ENCODE measurements at regions of chr9 and their contacts with region 1.

Region 1: GRCh38 chr9:35923927-35924763 is 14.9 kb downstream of the SPAAR start:
- DNase-seq: no peak
- H3K4me3 Mint-ChIP-seq: no peak overlapping the region
- H3K27ac Mint-ChIP-seq: no peak overlapping the region
- H3K4me1 Mint-ChIP-seq: no peaks in the 10 kb centered on the region
- H3K27me3 Mint-ChIP-seq: peaks cover 16% of the 10 kb centered on the region

Region 2: GRCh38 chr9:35599763-35600604 is 324.2 kb before region 1 on chr9:
- CTCF ChIA-PET with region 1: no interaction called
- DNase-seq: no peak
- H3K4me3 Mint-ChIP-seq: no peak overlapping the region
- H3K27ac Mint-ChIP-seq: no peak overlapping the region
- H3K4me1 Mint-ChIP-seq: peaks cover 23% of the 10 kb centered on the region
- H3K27me3 Mint-ChIP-seq: peaks cover 4% of the 10 kb centered on the region

Region 3: DNA sequence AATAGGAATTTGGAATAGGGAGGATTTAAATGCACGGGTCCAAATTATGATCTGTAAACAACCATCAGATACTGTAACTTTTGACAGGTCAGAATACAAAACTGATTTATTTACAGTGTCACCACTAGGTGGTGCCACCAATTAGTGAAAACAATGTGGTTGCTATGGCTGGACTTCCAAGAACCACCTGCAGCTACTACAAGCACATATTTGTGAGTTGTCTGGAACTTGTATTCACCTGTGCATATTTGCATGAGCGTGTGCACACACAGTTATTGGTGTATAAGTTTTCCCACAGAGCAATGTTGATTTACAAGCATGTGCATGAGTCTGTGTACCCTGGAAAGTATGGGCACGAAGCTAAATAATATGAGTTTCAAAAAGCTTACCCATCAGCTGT is 21.1 kb before region 1 on chr9:
- CTCF ChIA-PET with region 1: interaction called, 15 read pairs
- DNase-seq: peak; percentile 54
- H3K4me3 Mint-ChIP-seq: no peak overlapping the region
- H3K27ac Mint-ChIP-seq: no peak overlapping the region
- H3K4me1 Mint-ChIP-seq: peaks cover 18% of the 10 kb centered on the region
- H3K27me3 Mint-ChIP-seq: peaks cover 22% of the 10 kb centered on the region

Measured in activated naive CD4-positive, alpha-beta T cell treated with anti-CD3 and anti-CD28 coated beads, Interleukin-2, amount 10 ng/mL, durations not matched to agents 7 days and 5 days (primary cell).